ENCODE measurements at regions of chr2 and their contacts with region 1.

Region 1: DNA sequence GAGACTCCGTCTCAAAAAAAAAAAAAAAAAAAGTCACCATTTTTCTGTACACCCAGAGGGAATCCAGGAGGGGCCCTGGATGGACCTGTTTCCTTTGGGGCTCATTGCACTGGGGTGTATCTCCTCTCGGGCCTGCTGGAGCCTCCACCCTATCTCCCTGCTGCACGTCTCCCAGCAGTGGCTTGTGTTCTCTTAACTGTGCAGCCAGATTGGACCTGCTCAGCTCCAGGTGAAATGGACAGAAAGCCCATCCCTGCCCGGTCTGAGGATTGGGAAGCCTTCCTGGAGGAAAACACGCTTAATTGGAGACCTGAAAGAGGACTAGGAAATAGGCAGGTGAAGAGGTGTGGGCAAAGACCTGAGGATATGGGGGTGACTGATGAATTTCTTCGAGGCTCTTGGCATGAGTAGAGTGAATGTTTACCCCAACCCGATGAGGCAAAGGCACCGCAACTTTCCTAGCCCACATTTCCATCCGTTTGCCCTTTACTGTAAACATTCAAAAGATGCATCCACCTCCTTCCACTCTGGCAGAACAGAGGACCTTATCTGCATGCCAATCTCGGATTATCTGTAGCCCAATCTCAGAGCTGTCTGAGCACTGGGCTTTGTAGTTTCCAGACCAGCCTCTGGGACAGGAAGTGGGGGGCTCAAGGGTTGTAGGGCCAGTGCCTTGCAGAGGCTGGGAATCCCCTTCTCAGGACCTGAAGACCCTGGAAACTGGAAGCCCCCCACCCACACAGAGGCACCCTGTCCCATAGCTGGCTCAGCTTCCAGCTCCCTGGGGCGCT is 2.6 kb upstream of the ZAP70 start:
- DNase-seq: peak in 3 of 4 experiments; percentile 30 to 55 (median 33)
- ATAC-seq: peak; percentile 30
- H3K4me3 ChIP-seq: no peak overlapping the region
- H3K27ac ChIP-seq: no peak overlapping the region
- H3K4me1 ChIP-seq: peaks cover 24 to 42% of the 10 kb centered on the region in 2 experiments
- H3K27me3 ChIP-seq: no peaks in the 10 kb centered on the region
- CTCF ChIP-seq: no peak
- EP300 ChIP-seq: no peak
- POLR2A ChIP-seq: no peak
- RAD21 ChIP-seq: no peak

Region 2: DNA sequence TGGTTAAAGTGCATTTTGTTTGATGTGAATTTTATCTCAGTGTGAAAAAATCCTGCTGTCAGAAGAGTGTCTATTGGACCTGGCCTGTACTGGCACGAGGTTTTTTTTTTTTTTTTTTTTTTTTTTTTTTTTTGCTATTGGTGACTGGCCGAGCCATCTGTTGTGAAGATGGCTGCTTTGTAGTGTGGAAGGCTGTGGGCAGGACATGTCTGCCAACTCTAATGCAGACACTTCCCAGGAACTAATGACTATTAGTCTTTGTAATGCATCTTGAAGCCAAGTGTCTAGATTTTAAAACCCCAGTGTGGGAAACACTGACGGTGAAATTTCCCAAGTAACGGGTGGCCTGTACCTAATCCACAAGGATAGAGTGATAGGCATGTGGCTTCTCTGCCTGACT is 36.9 kb after region 1 on chr2:
- CTCF ChIA-PET with region 1: no interaction called
- POLR2A ChIA-PET with region 1: no interaction called
- in situ Hi-C with region 1: no loop called
- intact Hi-C with region 1: loop called (anchors 1 kb)
- DNase-seq: no peak
- ATAC-seq: no peak
- H3K4me3 ChIP-seq: no peak overlapping the region
- H3K27ac ChIP-seq: no peak overlapping the region
- H3K4me1 ChIP-seq: peaks cover 3 to 9% of the 10 kb centered on the region in 2 experiments; a peak in 4 of 5 replicates
- H3K27me3 ChIP-seq: no peaks in the 10 kb centered on the region
- CTCF ChIP-seq: no peak
- EP300 ChIP-seq: no peak
- POLR2A ChIP-seq: no peak
- RAD21 ChIP-seq: no peak

Region 3: GRCh38 chr2:97878865-97879264 is 168.1 kb after region 1 on chr2:
- CTCF ChIA-PET with region 1: no interaction called
- POLR2A ChIA-PET with region 1: no interaction called
- in situ Hi-C with region 1: no loop called
- intact Hi-C with region 1: no loop called
- DNase-seq: no peak
- ATAC-seq: no peak
- H3K4me3 ChIP-seq: no peak overlapping the region
- H3K27ac ChIP-seq: no peak overlapping the region
- H3K4me1 ChIP-seq: no peaks in the 10 kb centered on the region
- H3K27me3 ChIP-seq: no peaks in the 10 kb centered on the region
- CTCF ChIP-seq: no peak
- EP300 ChIP-seq: no peak
- POLR2A ChIP-seq: no peak
- RAD21 ChIP-seq: no peak